ENCODE measurements at regions of chr5 and their contacts with region 1.

Region 1: GRCh38 chr5:67209142-67209771 is 12.7 kb upstream of the CD180 start:
- DNase-seq: peak in 41 of 42 donors; percentile 23 to 88 (median 57)

Region 2: GRCh38 chr5:66807743-66808142 is 401.5 kb before region 1 on chr5:
- intact Hi-C with region 1: loop called (anchors 5 kb)
- DNase-seq: peak in 33 of 42 donors; percentile 10 to 82 (median 56)

Region 3: DNA sequence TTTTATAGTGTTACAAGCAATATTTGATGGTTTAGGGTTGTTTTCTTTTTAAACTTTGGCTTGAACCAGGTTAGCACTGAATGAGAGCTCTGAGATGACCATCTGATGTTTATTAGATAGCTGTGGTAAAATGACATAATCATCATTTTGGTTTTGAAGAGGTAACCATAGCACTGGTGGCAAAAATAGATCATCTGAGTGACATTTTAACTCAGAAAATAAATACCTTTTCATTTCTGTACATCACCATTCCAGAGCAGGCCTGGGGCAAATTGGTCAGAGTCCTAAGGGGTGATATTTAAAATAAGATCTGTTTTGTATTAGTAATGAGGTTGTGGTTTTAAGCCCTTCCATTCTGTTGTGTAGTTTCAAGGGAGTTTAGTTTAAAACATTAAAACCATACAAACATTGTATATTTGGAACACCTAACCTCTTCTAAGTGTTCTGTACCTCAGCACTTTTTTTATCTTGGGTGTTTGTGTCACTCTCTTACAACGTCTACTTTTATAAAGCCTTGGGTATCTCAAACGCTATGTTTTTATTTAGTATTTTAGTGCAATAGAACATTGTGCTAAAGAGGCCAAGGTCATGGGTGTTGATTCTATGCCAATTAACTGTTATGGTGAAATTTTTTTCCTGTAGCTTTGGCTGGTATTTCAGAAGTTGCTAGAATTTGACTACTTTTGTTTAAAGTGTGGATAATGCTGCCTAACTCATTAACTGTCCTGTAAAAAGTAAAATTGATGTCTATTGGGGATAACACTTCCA is 178.8 kb before region 1 on chr5:
- intact Hi-C with region 1: no loop called
- DNase-seq: no peak

Region 4: DNA sequence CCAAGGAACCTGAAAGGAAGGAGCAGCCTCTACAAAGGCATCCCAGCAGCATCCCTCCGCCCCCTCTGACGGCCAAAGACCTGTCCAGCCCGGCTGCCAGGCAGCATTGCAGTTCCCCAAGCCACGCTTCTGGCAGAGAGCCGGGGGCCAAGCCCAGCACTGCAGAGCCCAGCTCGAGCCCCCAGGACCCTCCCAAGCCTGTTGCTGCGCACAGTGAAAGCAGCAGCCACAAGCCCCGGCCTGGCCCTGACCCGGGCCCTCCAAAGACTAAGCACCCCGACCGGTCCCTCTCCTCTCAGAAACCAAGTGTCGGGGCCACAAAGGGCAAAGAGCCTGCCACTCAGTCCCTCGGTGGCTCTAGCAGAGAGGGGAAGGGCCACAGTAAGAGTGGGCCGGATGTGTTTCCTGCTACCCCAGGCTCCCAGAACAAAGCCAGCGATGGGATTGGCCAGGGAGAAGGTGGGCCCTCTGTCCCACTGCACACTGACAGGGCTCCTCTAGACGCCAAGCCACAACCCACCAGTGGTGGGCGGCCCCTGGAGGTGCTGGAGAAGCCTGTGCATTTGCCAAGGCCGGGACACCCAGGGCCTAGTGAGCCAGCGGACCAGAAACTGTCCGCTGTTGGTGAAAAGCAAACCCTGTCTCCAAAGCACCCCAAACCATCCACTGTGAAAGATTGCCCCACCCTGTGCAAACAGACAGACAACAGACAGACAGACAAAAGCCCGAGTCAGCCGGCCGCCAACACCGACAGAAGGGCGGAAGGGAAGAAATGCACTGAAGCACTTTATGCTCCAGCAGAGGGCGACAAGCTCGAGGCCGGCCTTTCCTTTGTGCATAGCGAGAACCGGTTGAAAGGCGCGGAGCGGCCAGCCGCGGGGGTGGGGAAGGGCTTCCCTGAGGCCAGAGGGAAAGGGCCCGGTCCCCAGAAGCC is 43.5 kb before region 1 on chr5:
- intact Hi-C with region 1: loop called (anchors 5 kb)
- DNase-seq: peak; percentile 70 to 91 (median 83)

Region 5: GRCh38 chr5:67301285-67301903 is 92.1 kb after region 1 on chr5:
- intact Hi-C with region 1: no loop called
- DNase-seq: no peak

Measured in head of caudate nucleus (tissue), 42 donors.